Caco-2 (cell line): ENCODE measurements at regions of chr4 and their contacts with region 1.

Region 1: DNA sequence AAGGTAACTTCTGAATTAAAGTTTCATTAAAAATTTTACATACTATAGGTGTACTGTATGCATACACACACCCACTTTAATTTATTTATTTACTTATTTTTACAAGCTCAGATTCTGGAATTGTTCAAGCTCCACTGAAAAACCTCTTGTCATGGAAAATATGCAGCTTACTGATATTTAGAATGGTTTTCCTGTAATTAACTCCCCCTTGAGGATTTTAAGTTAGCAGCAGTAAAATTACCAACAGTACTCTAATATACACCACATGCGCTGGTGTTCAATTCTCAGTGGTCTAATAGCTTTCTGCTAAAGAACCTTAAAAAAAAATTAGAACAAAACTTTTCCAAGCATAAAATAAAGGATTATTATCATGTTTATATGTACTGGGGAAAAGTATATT is 12.0 kb downstream of the MAB21L2 start:
- DNase-seq: no peak
- H3K4me3 ChIP-seq: no peak overlapping the region
- H3K4me3 Mint-ChIP-seq: no peak overlapping the region
- H3K27ac Mint-ChIP-seq: no peak overlapping the region
- H3K4me1 ChIP-seq: 0 out of 2 replicates have a peak, but pooled peaks cover 5% of the 10 kb centered on the region
- H3K4me1 Mint-ChIP-seq: peaks cover 6% of the 10 kb centered on the region
- H3K27me3 ChIP-seq: no peaks in the 10 kb centered on the region
- H3K27me3 Mint-ChIP-seq: no peaks in the 10 kb centered on the region
- CTCF ChIP-seq: no peak

Region 2: GRCh38 chr4:150098214-150098613 is 495.8 kb before region 1 on chr4:
- CTCF ChIA-PET with region 1: no interaction called
- POLR2A ChIA-PET with region 1: no interaction called
- intact Hi-C with region 1: no loop called
- DNase-seq: no peak
- H3K4me3 ChIP-seq: no peak overlapping the region
- H3K4me3 Mint-ChIP-seq: no peak overlapping the region
- H3K27ac Mint-ChIP-seq: no peak overlapping the region
- H3K4me1 ChIP-seq: no peaks in the 10 kb centered on the region
- H3K4me1 Mint-ChIP-seq: no peaks in the 10 kb centered on the region
- H3K27me3 ChIP-seq: no peaks in the 10 kb centered on the region
- H3K27me3 Mint-ChIP-seq: no peaks in the 10 kb centered on the region
- CTCF ChIP-seq: no peak

Region 3: GRCh38 chr4:150297861-150298474 is 296.0 kb before region 1 on chr4:
- CTCF ChIA-PET with region 1: no interaction called
- POLR2A ChIA-PET with region 1: no interaction called
- intact Hi-C with region 1: loop called (anchors 5 kb)
- DNase-seq: peak in 1 of 2 experiments; percentile 39
- H3K4me3 ChIP-seq: no peak overlapping the region
- H3K4me3 Mint-ChIP-seq: no peak overlapping the region
- H3K27ac Mint-ChIP-seq: no peak overlapping the region
- H3K4me1 ChIP-seq: no peaks in the 10 kb centered on the region
- H3K4me1 Mint-ChIP-seq: no peaks in the 10 kb centered on the region
- H3K27me3 ChIP-seq: no peaks in the 10 kb centered on the region
- H3K27me3 Mint-ChIP-seq: no peaks in the 10 kb centered on the region
- CTCF ChIP-seq: peak; percentile 58 to 59

Region 4: DNA sequence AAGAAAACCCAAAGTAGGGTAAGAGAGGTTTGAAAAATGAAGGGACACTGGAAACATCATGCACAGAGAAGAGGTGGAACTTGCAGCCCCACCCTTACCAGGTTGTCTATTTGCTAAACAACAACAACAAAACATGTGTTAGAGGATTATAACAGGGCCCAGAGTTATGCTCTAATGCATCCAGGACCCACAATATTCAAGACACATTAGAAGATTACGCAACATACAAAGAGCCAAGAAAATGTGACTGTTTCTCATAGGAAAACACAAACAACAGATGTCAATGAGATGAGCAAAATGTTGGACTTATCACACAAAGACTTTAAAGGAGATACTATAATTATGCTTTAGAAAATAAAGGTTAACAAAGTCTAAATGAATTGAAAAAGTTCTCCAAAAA is 292.6 kb after region 1 on chr4:
- CTCF ChIA-PET with region 1: no interaction called
- POLR2A ChIA-PET with region 1: no interaction called
- intact Hi-C with region 1: no loop called
- DNase-seq: no peak
- H3K4me3 ChIP-seq: no peak overlapping the region
- H3K4me3 Mint-ChIP-seq: no peak overlapping the region
- H3K27ac Mint-ChIP-seq: no peak overlapping the region
- H3K4me1 ChIP-seq: no peaks in the 10 kb centered on the region
- H3K4me1 Mint-ChIP-seq: no peaks in the 10 kb centered on the region
- H3K27me3 ChIP-seq: no peaks in the 10 kb centered on the region
- H3K27me3 Mint-ChIP-seq: no peaks in the 10 kb centered on the region
- CTCF ChIP-seq: no peak

Region 5: DNA sequence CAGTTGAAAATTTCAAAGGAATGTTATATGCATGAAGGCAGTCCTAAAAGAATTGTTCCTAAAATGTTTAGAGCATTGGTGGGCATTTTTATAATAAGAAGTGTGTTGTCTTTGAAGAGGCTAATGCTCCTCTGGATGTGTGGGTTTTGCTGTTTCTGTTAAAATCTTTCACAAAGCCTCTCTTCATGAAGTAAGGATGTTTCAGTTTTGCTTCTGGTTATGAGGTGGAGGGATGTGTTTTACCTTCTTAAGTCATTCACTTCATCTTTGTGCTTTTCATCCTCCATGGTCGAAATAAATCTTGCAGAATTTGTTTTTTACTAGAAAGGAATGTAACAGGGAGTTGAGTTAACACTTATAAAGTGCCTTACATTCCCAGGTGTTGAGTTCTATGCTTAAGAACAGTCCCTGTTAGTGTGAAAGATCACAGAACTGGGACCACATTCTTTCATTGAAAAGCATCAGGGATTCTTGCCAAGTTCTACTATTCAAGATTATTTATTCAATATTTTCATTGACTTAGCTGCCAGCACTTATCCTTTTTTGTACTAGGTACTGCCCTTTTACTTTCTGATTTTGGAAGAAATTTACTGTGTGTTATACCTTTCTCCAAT is 836.1 kb after region 1 on chr4:
- CTCF ChIA-PET with region 1: no interaction called
- POLR2A ChIA-PET with region 1: no interaction called
- intact Hi-C with region 1: no loop called
- DNase-seq: no peak
- H3K4me3 ChIP-seq: no peak overlapping the region
- H3K4me3 Mint-ChIP-seq: no peak overlapping the region
- H3K27ac Mint-ChIP-seq: no peak overlapping the region
- H3K4me1 ChIP-seq: peaks cover 6% of the 10 kb centered on the region; the same call in 1 of the 2 replicates
- H3K4me1 Mint-ChIP-seq: peaks cover 21% of the 10 kb centered on the region
- H3K27me3 ChIP-seq: no peaks in the 10 kb centered on the region
- H3K27me3 Mint-ChIP-seq: no peaks in the 10 kb centered on the region
- CTCF ChIP-seq: no peak